ENCODE measurements at regions of chr12 and their contacts with region 1.

Region 1: DNA sequence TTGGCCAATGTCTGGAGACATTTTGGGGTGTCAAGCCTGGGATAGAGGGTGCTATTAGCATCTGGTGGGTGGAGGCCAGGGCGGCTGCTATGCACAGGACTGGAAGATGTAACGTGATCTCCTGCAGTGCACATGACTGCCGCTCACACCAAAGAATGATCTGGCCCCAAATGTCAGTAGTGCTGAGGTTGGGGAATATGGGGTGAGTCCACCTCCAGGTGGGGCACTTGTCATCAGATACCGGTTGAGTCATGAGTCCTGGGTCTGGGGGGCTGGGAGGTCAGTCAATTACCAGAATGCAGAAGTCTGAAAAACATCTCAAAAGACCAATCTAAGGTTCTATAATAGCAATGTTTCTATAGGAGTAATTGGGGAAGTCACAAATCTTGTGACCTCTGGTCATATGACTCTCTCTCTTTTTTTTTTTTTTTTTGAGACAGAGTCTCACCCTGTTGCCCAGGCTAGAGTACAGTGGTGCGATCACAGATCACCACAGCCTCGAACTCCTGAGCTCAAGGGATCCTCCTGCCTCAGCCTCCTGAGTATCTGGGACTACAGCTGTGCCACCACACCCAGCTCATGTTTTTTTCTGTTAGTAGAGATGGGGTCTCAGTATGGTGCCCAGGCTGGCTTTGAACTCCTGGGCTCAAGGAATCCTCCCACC is 6.0 kb upstream of the SDSL start:
- DNase-seq: peak in 1 of 2 donors; percentile 29
- H3K4me3 ChIP-seq: no peak overlapping the region
- CTCF ChIP-seq: no peak
- POLR2A ChIP-seq: no peak

Region 2: DNA sequence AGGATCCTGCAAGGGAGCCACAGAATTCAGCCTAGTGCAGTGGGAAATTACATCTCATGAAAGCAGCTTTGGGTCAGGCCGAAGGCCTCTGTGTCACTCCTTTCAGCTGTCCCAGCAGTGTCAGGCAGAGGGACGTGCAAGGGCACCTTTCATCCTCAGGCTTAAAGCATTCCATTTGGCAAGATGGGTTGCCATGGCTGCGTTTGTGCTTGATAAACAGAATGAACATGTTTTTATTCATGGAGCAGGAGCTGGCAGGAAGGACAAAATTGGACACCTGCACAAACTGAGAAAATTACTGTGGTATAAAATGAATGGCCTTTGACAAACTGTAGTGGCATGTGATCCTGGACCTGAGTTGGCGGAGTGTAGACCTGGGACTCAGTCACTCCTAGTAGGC is 1700.9 kb before region 1 on chr12:
- intact Hi-C with region 1: loop called (anchors 5 kb)
- DNase-seq: no peak
- H3K4me3 ChIP-seq: no peak overlapping the region
- CTCF ChIP-seq: no peak
- POLR2A ChIP-seq: no peak

Region 3: DNA sequence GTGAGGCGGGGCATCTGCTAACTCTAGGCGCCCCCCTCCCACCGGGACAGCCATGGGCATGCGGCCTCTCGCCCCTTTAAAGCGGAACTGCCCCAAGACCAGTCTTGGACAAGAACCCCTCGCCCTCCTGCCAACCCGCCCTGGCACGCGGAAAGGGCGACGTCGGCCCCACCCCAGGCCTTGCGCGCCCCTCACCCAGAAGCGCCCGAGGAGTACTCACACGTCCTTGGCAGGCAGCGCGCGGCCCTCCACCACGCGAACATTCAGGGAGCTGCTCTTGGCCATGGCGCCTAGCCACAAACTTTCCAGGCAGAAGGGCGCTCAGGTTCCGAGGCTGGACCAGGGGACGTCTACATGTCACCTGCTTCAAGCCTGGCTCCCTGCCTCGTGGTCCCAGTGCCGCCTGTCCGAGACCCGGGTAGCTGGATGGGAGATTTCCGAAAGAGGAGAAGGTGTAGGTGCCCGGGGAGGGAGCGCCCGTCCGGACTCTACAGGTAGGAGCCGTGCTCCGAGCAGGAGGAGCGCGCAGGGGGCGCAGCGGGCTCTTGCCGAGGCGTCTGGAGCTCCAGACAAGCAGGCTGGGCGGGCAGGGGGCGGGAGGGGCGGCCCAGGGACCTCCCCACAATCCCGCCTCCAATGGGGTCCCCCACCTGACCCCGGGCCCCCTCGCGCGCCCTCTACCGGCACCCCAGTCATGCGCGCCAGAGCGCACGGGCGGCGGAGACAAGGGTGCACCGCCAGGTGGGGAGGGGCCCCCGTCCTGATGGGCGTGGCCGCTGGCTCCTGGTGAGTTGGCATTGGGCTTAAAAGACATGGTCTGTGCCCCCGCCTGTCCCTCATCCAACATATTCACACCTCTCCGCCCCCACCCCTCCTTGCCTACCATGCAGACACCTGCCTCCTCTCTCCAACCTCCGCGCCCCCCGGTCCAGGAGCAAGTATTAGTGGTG is 280.8 kb before region 1 on chr12 and contains the start of gene RASAL1:
- intact Hi-C with region 1: no loop called
- DNase-seq: peak in 1 of 2 donors; percentile 42
- H3K4me3 ChIP-seq: no peak within 1 kb of the TSS
- CTCF ChIP-seq: no peak
- POLR2A ChIP-seq: no peak
- total RNA-seq, gene RASAL1: 39.3 to 59.3 (median 50.9) TPM